Mammary epithelial cell (primary cell): ENCODE measurements at regions of chr12 and their contacts with region 1.

Region 1: DNA sequence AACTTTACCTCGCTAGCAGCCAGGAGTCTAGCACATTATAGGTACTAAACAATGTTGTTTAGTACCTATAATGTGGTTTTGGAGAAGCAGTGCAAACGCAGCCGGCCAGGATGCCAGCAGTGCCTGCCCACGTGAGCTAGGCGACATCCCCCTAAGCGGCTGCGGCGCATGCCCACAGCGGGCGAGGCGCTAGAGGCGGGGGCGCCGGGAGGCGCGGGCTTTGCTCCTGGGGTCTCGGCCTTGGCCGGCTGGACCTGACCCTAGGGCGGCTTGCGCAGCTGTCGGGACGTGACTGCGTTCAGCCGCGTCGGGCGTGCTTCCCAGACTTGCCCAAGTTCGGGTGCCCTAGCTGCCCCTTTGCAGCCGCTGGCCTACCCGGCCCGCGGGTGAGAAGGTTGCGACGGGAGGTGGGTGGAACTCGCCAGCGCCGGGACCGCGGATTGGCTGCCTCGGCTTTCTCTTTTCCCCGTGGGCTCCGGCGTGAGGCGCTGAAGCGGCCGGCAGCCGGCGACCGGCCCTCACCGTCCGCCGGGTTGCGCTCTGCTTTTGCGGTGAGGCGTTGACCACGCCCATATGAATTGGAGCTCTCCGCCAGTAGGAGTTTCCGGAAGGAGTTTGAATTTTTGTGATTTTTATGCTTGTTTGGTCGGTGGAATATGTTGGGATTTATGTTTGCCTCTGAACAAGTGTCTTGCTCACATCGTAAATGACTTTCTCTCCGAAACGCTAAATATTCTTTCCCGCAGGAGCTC is at the start of gene TMEM19:
- DNase-seq: peak; percentile 91
- H3K4me3 ChIP-seq: peak within 1 kb of the TSS; percentile 86 to 97 (median 89)
- H3K27ac ChIP-seq: peak within 1 kb of the TSS; percentile 81
- H3K4me1 ChIP-seq: peaks cover 11% of the 10 kb centered on the region
- H3K27me3 ChIP-seq: no peaks in the 10 kb centered on the region
- CTCF ChIP-seq: peak in 1 of 2 donors; percentile 65
- total RNA-seq, gene TMEM19: 22.1 to 41.7 TPM

Region 2: DNA sequence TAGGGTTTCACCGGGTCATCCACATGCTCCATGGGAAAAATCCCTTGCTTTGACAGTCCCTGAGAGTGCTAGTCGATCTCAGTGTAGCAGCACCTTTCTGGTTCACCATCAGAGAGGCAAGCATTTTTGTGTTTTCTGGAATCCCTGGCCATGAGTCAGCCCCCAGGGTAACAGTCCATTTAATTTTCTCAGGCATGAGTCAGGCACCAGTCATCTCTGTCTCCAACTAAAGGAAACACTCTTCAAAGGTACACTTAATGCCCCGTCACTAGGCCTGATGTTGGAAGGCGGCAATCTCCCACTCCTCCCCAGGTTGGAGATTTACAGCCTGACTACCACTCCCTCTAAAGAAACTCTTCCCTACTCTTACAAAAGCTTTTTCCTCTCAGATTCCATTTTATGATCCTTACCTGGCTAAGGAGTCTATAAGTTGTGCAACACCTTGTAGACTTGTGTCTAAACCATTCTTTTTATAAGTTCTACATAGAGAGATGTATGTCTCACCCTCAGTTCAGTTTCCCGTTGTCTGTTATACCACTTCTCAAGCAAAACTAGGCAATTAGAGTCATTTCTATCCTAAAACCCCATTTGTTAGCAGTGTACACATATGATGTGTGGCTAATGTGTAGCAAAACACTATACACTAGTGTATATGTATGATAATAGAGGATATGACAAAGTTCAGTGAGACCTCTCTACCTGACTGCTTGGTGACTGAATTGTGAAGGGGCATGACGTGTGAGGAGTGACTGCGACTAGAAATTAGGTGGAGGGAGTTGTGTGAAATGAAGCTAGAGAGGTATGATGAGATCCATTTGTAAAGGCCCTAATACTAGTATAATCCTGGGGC is 24.4 kb after region 1 on chr12:
- CTCF ChIA-PET with region 1: no interaction called
- dilution Hi-C with region 1: no loop called
- in situ Hi-C with region 1: no loop called
- intact Hi-C with region 1: loop called (anchors 2 kb)
- DNase-seq: peak; percentile 97
- H3K4me3 ChIP-seq: no peak overlapping the region
- H3K27ac ChIP-seq: peak overlapping the region; percentile 78
- H3K4me1 ChIP-seq: peaks cover 33% of the 10 kb centered on the region
- H3K27me3 ChIP-seq: no peaks in the 10 kb centered on the region
- CTCF ChIP-seq: no peak

Region 3: GRCh38 chr12:71719615-71720370 is 33.7 kb after region 1 on chr12:
- CTCF ChIA-PET with region 1: interaction called, 28 read pairs
- dilution Hi-C with region 1: no loop called
- in situ Hi-C with region 1: no loop called
- intact Hi-C with region 1: loop called (anchors 1 kb)
- DNase-seq: peak; percentile 95
- H3K4me3 ChIP-seq: peak overlapping the region in 1 of 3 experiments; percentile 16
- H3K27ac ChIP-seq: peak overlapping the region; percentile 22
- H3K4me1 ChIP-seq: peaks cover 16% of the 10 kb centered on the region
- H3K27me3 ChIP-seq: no peaks in the 10 kb centered on the region
- CTCF ChIP-seq: no peak

Region 4: GRCh38 chr12:71754461-71755145 is 68.5 kb after region 1 on chr12 and contains the start of gene RAB21:
- CTCF ChIA-PET with region 1: no interaction called
- dilution Hi-C with region 1: no loop called
- in situ Hi-C with region 1: loop called in 1 of 2 experiments (anchors 10 kb)
- intact Hi-C with region 1: loop called (anchors 2 kb)
- DNase-seq: peak; percentile 97
- H3K4me3 ChIP-seq: peak within 1 kb of the TSS; percentile 66 to 86 (median 72)
- H3K27ac ChIP-seq: peak within 1 kb of the TSS; percentile 88
- H3K4me1 ChIP-seq: peaks cover 5% of the 10 kb centered on the region
- H3K27me3 ChIP-seq: no peaks in the 10 kb centered on the region
- CTCF ChIP-seq: peak in 1 of 2 donors; percentile 30
- total RNA-seq, gene RAB21: 13.2 to 76.6 TPM